ENCODE measurements at regions of chr11 and their contacts with region 1.

Region 1: GRCh38 chr11:123110356-123110755 is 48.4 kb upstream of the HSPA8 start:
- DNase-seq: no peak
- H3K4me3 ChIP-seq: no peak overlapping the region
- H3K4me3 Mint-ChIP-seq: peak overlapping the region in 5 of 8 donors; percentile 7 to 57 (median 23)
- H3K27ac ChIP-seq: no peak overlapping the region
- H3K27ac Mint-ChIP-seq: no peak overlapping the region
- H3K4me1 ChIP-seq: peaks cover 5% of the 10 kb centered on the region
- H3K4me1 Mint-ChIP-seq: peaks cover 5 to 9% (median 6%) of the 10 kb centered on the region in 4 donors
- H3K27me3 ChIP-seq: no peaks in the 10 kb centered on the region
- H3K27me3 Mint-ChIP-seq: no peaks in the 10 kb centered on the region

Region 2: GRCh38 chr11:123083623-123084029 is 26.7 kb before region 1 on chr11:
- CTCF ChIA-PET with region 1: interaction called, 121 read pairs
- POLR2A ChIA-PET with region 1: interaction called, 38 read pairs
- intact Hi-C with region 1: no loop called
- DNase-seq: peak; percentile 56 to 91 (median 72)
- H3K4me3 ChIP-seq: peak overlapping the region in 1 of 2 donors; percentile 3
- H3K4me3 Mint-ChIP-seq: peak overlapping the region; percentile 73 to 88 (median 78)
- H3K27ac ChIP-seq: peak overlapping the region; percentile 45
- H3K27ac Mint-ChIP-seq: peak overlapping the region; percentile 93 to 96 (median 93)
- H3K4me1 ChIP-seq: peaks cover 57% of the 10 kb centered on the region
- H3K4me1 Mint-ChIP-seq: peaks cover 31 to 66% (median 50%) of the 10 kb centered on the region in 4 donors
- H3K27me3 ChIP-seq: no peaks in the 10 kb centered on the region
- H3K27me3 Mint-ChIP-seq: no peaks in the 10 kb centered on the region

Region 3: DNA sequence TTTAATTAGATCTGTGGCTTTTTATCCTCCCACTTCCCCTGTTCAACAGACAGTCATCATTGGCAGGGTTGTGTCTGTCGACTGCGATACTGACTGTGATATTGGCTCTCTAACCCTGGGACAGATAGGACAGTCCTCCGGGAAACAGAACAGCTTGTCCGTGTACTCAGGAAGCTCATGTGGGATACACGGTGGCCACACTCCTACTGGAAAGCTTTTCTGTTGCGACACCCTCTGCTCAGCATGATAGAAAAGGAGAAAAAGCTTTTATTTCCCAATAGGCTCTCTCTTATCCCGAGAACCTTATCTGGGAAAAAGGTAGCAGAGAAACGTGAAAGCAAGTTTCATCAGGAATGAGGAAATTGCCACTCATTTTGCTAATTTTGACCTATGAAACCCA is 12.0 kb after region 1 on chr11:
- CTCF ChIA-PET with region 1: interaction called, 15 read pairs
- POLR2A ChIA-PET with region 1: no interaction called
- intact Hi-C with region 1: no loop called
- DNase-seq: no peak
- H3K4me3 ChIP-seq: no peak overlapping the region
- H3K4me3 Mint-ChIP-seq: no peak overlapping the region
- H3K27ac ChIP-seq: no peak overlapping the region
- H3K27ac Mint-ChIP-seq: no peak overlapping the region
- H3K4me1 ChIP-seq: no peaks in the 10 kb centered on the region
- H3K4me1 Mint-ChIP-seq: no peaks in the 10 kb centered on the region
- H3K27me3 ChIP-seq: no peaks in the 10 kb centered on the region
- H3K27me3 Mint-ChIP-seq: peaks cover 3 to 4% of the 10 kb centered on the region in 2 donors

Region 4: DNA sequence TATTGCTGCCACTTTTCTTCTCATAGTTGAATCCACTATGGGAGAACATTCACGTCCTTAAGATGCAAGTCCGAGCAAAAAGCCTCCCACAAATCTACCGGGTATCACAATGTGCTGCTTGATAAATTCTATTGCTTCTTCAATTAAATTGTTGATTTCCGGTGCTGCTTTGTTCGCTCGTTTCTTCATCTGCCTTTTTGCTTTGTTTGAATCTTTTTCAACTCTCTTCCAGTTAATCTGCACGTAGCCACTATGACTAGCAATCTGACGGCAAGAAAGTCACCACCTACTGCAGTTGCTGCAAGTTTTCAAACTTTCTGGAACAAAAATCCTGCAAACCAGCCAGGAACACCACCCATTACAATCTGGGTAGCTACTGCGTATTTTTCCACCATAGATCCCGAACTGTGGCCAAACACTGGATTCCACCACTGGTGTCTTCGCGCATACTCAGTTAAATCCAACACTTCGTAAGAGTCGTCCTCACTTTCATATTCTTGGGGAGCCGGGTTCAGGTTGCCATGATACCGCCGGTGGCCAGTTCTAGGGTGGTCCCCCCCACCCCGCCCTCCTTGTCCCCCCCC is 25.6 kb after region 1 on chr11:
- CTCF ChIA-PET with region 1: no interaction called
- POLR2A ChIA-PET with region 1: no interaction called
- intact Hi-C with region 1: no loop called
- DNase-seq: no peak
- H3K4me3 ChIP-seq: no peak overlapping the region
- H3K4me3 Mint-ChIP-seq: no peak overlapping the region
- H3K27ac ChIP-seq: no peak overlapping the region
- H3K27ac Mint-ChIP-seq: no peak overlapping the region
- H3K4me1 ChIP-seq: no peaks in the 10 kb centered on the region
- H3K4me1 Mint-ChIP-seq: no peaks in the 10 kb centered on the region
- H3K27me3 ChIP-seq: no peaks in the 10 kb centered on the region
- H3K27me3 Mint-ChIP-seq: peaks cover 1 to 4% of the 10 kb centered on the region in 2 donors

Region 5: GRCh38 chr11:123261345-123262106 is 151.2 kb after region 1 on chr11:
- CTCF ChIA-PET with region 1: interaction called, 21 read pairs
- POLR2A ChIA-PET with region 1: no interaction called
- intact Hi-C with region 1: loop called (anchors 1 kb)
- DNase-seq: peak in 4 of 5 donors; percentile 28 to 38 (median 35)
- H3K4me3 ChIP-seq: no peak overlapping the region
- H3K4me3 Mint-ChIP-seq: peak overlapping the region in 5 of 8 donors; percentile 32 to 71 (median 49)
- H3K27ac ChIP-seq: no peak overlapping the region
- H3K27ac Mint-ChIP-seq: peak overlapping the region in 2 of 7 donors; percentile 4 to 59
- H3K4me1 ChIP-seq: peaks cover 7% of the 10 kb centered on the region
- H3K4me1 Mint-ChIP-seq: peaks cover 2 to 9% (median 7%) of the 10 kb centered on the region in 4 donors
- H3K27me3 ChIP-seq: peaks cover 4% of the 10 kb centered on the region
- H3K27me3 Mint-ChIP-seq: peaks cover 19 to 27% of the 10 kb centered on the region in 2 donors

Measured in CD4-positive, alpha-beta memory T cell (primary cell).